ENCODE measurements at regions of chr11 and their contacts with region 1.

Region 1: GRCh38 chr11:3213659-3214419 is 4.8 kb downstream of the MRGPRG start:
- DNase-seq: peak; percentile 49

Region 2: GRCh38 chr11:3123761-3124733 is 89.8 kb before region 1 on chr11:
- intact Hi-C with region 1: loop called in 1 of 2 experiments (anchors 5 kb)
- DNase-seq: peak; percentile 96

Region 3: DNA sequence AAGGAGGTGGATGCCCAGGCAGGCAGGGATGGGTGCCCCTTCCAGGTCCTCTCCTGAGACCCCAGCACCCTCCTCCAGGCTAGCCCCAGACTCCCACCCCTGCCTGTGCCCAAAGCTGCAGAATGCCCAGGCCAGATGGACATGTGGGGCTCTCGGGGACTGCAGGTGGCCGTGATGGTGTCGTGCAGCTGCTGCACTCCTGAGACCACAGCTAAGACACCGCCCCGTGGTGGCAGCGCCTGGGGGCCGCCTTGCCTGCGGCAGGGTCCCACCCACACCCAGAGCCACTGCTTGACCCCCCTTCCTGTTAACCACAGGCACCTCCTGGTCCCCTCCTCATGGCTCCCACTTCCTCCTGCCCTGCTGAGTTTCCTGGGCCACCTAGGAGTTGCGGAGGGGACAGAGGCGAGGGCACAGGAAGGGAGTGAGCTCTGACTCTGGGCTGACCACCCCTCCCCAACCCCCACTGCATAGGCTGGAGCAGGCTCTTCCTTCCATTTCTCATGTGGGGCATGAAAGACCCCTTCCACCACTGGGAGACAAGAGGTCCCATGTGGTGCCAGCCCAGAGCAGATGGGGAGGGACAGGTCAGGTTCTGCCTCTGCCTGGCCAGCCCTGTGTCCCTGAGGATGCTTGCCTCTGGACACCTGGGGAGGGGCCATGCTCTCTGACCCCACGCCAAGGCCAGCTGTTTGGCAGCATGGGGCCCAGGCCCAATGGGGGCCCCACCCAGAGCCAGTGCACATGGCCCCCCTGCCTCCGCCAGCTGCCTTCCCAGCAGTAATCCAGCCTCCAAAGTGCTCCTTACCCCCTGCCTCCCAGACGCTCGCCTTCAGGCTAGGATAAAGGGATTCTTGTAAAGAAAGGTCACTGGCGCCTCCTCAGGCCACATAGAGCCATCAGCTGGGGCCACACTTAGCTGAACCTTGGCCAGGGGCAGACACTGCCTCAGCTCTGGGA is 78.1 kb before region 1 on chr11:
- intact Hi-C with region 1: no loop called
- DNase-seq: peak; percentile 72

Region 4: DNA sequence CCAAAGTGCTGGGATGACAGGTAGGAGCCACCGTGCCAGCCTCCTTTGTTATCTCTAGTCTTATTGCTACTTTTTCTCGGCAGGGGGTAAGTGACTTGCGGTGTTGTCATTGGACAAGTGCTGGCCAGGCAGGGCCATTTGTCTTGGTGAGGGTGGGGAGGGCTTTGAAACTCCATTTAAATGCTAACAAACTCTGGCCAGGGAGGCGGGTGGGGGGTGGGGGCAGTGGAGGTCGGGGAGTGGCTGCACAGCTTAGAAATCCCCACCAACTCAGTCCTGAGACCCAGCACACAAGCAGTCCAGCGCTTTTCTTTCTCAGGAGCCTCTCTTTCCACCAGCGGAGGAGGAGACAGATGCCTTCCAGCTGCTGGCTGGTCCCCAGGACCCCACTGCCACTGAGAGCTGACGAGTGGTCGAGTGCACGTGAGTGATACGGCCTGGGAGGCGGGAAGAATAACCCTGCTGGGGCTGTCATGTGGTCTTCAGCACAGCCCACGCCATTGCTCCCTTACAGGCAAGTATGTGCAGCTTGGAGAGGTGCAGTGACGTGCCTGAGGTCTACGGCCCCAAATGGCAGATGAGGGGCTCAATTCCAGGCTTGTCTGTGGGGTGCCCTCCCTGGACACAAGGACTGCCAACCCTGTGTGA is 24.5 kb before region 1 on chr11:
- intact Hi-C with region 1: no loop called
- DNase-seq: no peak

Measured in posterior vena cava (tissue), 2 donors.